Activated T-helper 1 cell treated with anti-CD3 and anti-CD28 coated beads, Interleukin-12 subunit alpha, Interleukin-12 subunit beta, Interleukin-2, Interleukin-4 antibody, amounts not matched to agents 30 ng/mL and 10 ng/mL and 1 ng/mL, durations not matched to agents 14 hours and 24 hours and 36 hours (primary cell): ENCODE measurements at regions of chr9 and their contacts with region 1.

Region 1: GRCh38 chr9:19174127-19174912 is 47.0 kb upstream of the PLIN2 start:
- DNase-seq: peak; percentile 32
- H3K4me3 Mint-ChIP-seq: no peak overlapping the region
- H3K27ac Mint-ChIP-seq: peak overlapping the region; percentile 15
- H3K4me1 Mint-ChIP-seq: peaks cover 22% of the 10 kb centered on the region
- H3K27me3 Mint-ChIP-seq: peaks cover 2% of the 10 kb centered on the region

Region 2: GRCh38 chr9:18255158-18255629 is 919.1 kb before region 1 on chr9:
- intact Hi-C with region 1: loop called (anchors 10 kb)
- DNase-seq: peak; percentile 48
- H3K4me3 Mint-ChIP-seq: no peak overlapping the region
- H3K27ac Mint-ChIP-seq: no peak overlapping the region
- H3K4me1 Mint-ChIP-seq: no peaks in the 10 kb centered on the region
- H3K27me3 Mint-ChIP-seq: peaks cover 9% of the 10 kb centered on the region

Region 3: GRCh38 chr9:18689921-18690320 is 484.4 kb before region 1 on chr9:
- intact Hi-C with region 1: no loop called
- DNase-seq: no peak
- H3K4me3 Mint-ChIP-seq: no peak overlapping the region
- H3K27ac Mint-ChIP-seq: no peak overlapping the region
- H3K4me1 Mint-ChIP-seq: no peaks in the 10 kb centered on the region
- H3K27me3 Mint-ChIP-seq: no peaks in the 10 kb centered on the region

Region 4: GRCh38 chr9:18976709-18977531 is 197.4 kb before region 1 on chr9:
- intact Hi-C with region 1: no loop called
- DNase-seq: no peak
- H3K4me3 Mint-ChIP-seq: no peak overlapping the region
- H3K27ac Mint-ChIP-seq: no peak overlapping the region
- H3K4me1 Mint-ChIP-seq: no peaks in the 10 kb centered on the region
- H3K27me3 Mint-ChIP-seq: peaks cover 7% of the 10 kb centered on the region

Region 5: DNA sequence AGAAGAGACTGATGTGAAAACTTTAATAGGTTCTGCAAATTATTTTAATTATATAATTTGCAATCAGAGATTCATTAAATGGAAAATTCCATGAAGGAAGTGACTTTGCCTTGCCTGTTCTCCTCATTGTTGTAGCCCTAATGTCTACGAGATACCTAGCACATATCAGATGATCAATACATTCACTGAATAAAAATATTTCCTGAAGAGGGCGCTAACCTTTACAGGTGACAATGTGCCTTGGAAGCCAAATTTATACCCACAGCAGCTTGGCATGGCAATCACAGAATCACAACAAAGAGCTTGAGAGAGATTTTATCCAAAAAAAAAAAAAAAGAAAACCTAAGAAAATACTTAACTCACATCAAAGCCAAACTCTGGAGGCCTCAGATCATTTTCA is 89.0 kb before region 1 on chr9:
- intact Hi-C with region 1: loop called (anchors 1 kb)
- DNase-seq: no peak
- H3K4me3 Mint-ChIP-seq: no peak overlapping the region
- H3K27ac Mint-ChIP-seq: peak overlapping the region; percentile 48
- H3K4me1 Mint-ChIP-seq: peaks cover 5% of the 10 kb centered on the region
- H3K27me3 Mint-ChIP-seq: no peaks in the 10 kb centered on the region

Region 6: GRCh38 chr9:19127881-19128500 is 46.3 kb before region 1 on chr9:
- intact Hi-C with region 1: loop called (anchors 1 kb)
- DNase-seq: peak; percentile 18
- H3K4me3 Mint-ChIP-seq: peak overlapping the region; percentile 92
- H3K27ac Mint-ChIP-seq: peak overlapping the region; percentile 89
- H3K4me1 Mint-ChIP-seq: peaks cover 53% of the 10 kb centered on the region
- H3K27me3 Mint-ChIP-seq: no peaks in the 10 kb centered on the region

Region 7: DNA sequence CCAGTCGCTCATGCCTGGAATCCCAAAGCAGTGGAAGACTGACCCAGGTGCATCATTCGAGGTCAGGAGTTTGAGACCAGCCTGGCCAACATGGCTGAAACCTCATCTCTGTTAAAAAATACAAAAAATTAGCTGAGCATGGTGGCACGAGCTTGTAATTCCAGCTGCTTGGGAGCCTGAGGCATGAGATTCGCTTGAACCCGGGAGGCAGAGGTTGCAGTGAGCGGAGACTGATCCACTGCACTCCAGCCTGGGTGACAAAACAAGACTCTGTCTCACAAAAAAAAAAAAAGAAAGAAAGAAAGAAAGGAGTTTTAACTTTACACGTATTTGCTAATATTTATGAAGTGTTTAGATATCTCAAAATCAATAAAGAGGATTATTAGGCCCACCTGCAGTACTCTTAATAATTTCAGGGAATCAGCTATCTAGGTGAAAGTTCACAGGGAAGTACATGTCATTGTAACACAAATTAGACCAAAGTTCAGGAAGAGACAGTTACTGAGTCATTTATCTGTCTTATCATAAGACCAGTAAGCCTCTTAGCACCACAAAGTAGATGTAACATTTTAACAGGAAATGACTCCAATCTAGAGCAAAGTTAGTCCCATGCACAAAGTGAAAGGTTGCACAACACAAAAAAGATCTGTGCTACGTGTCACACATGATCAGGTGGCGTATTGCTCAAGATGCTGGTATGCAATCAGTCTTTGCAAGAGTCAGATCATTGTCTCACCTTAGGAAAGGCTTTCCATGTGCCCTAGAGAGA is 12.9 kb before region 1 on chr9:
- intact Hi-C with region 1: loop called (anchors 1 kb)
- DNase-seq: peak; percentile 60
- H3K4me3 Mint-ChIP-seq: peak overlapping the region; percentile 48
- H3K27ac Mint-ChIP-seq: peak overlapping the region; percentile 95
- H3K4me1 Mint-ChIP-seq: peaks cover 19% of the 10 kb centered on the region
- H3K27me3 Mint-ChIP-seq: no peaks in the 10 kb centered on the region

Region 8: DNA sequence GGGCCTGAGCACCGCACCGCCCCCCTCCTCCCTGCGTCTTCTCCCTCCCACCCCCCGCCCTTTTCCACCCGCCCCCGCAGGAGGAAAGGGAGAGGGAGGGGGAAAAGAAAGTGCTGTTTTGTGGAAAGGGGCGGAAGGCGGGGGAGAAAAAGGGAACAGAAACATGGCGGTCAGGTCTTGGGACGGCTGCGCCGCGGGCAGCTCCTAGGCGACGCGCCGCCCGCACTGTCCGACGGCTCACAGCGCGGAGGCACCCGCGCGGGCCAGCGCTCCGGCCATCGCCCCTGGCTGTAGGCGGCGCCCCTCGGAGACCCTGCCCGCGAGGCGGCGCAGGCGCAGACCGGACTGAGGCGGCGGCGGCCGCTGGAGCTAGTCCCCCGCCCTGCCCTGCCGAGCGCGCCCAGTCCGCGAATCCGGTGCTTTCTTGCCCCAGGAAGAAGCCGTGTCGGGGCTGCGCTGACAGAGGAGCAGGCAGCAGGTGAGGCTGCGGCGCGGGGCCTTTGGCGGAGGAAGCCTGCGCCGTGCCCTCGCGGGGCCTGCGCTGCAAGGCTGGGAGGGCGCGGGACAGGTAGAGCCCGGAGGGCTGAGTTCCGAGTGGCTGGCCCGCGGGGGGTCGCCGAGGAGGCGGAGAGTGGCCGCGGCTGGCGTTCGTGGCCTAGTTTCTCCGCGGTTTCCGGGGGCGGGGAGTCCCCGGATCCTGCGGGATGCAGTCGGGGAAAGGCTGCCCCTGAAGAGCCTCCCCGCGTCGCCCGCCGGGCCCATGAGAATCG is 56.2 kb after region 1 on chr9 and contains the start of gene DENND4C:
- intact Hi-C with region 1: no loop called
- DNase-seq: peak; percentile 83
- H3K4me3 Mint-ChIP-seq: peak within 1 kb of the TSS; percentile 77
- H3K27ac Mint-ChIP-seq: peak within 1 kb of the TSS; percentile 73
- H3K4me1 Mint-ChIP-seq: peaks cover 8% of the 10 kb centered on the region
- H3K27me3 Mint-ChIP-seq: no peaks in the 10 kb centered on the region
- total RNA-seq, gene DENND4C: 18.4 and 21.1 TPM in 2 replicates